Naive thymus-derived CD4-positive, alpha-beta T cell (primary cell): ENCODE measurements at regions of chr12 and their contacts with region 1.

Region 1: GRCh38 chr12:48454667-48455066 is 17.7 kb upstream of the ANP32D start:
- DNase-seq: peak in 7 of 9 donors; percentile 13 to 57 (median 32)
- ATAC-seq: peak; percentile 73
- H3K4me3 ChIP-seq: no peak overlapping the region
- H3K4me3 Mint-ChIP-seq: no peak overlapping the region
- H3K27ac ChIP-seq: no peak overlapping the region
- H3K27ac Mint-ChIP-seq: no peak overlapping the region
- H3K4me1 ChIP-seq: no peaks in the 10 kb centered on the region
- H3K4me1 Mint-ChIP-seq: no peaks in the 10 kb centered on the region
- H3K27me3 ChIP-seq: no peaks in the 10 kb centered on the region
- H3K27me3 Mint-ChIP-seq: peaks cover 0 to 18% (median 8%) of the 10 kb centered on the region in 5 donors

Region 2: GRCh38 chr12:48183091-48183875 is 271.4 kb before region 1 on chr12 and contains the start of gene CCDC184:
- CTCF ChIA-PET with region 1: interaction called, 3 read pairs
- POLR2A ChIA-PET with region 1: no interaction called
- intact Hi-C with region 1: loop called in 1 of 2 experiments (anchors 1 kb)
- DNase-seq: peak; percentile 58 to 85 (median 83)
- ATAC-seq: peak; percentile 84
- H3K4me3 ChIP-seq: peak within 1 kb of the TSS; percentile 80
- H3K4me3 Mint-ChIP-seq: peak within 1 kb of the TSS; percentile 91 to 98 (median 96)
- H3K27ac ChIP-seq: peak within 1 kb of the TSS; percentile 59
- H3K27ac Mint-ChIP-seq: peak within 1 kb of the TSS; percentile 60 to 95 (median 86)
- H3K4me1 ChIP-seq: peaks cover 6 to 11% of the 10 kb centered on the region in 2 donors
- H3K4me1 Mint-ChIP-seq: peaks cover 5 to 28% (median 8%) of the 10 kb centered on the region in 7 donors
- H3K27me3 ChIP-seq: peaks cover 0 to 4% of the 10 kb centered on the region in 2 donors
- H3K27me3 Mint-ChIP-seq: peaks cover 21 to 81% (median 38%) of the 10 kb centered on the region in 5 donors
- total RNA-seq, gene CCDC184: 0.22 to 3.8 (median 1.8) TPM in 4 of 5 experiments, not detected in the other

Region 3: GRCh38 chr12:48189331-48190125 is 265.1 kb before region 1 on chr12:
- CTCF ChIA-PET with region 1: interaction called, 3 read pairs
- POLR2A ChIA-PET with region 1: no interaction called
- intact Hi-C with region 1: loop called in 1 of 2 experiments (anchors 1 kb)
- DNase-seq: peak; percentile 29 to 72 (median 62)
- ATAC-seq: peak; percentile 91
- H3K4me3 ChIP-seq: no peak overlapping the region
- H3K4me3 Mint-ChIP-seq: no peak overlapping the region
- H3K27ac ChIP-seq: no peak overlapping the region
- H3K27ac Mint-ChIP-seq: no peak overlapping the region
- H3K4me1 ChIP-seq: peaks cover 0 to under 1% of the 10 kb centered on the region in 2 donors
- H3K4me1 Mint-ChIP-seq: peaks cover 0 to 12% (median 0%) of the 10 kb centered on the region in 7 donors
- H3K27me3 ChIP-seq: no peaks in the 10 kb centered on the region
- H3K27me3 Mint-ChIP-seq: peaks cover 16 to 76% (median 22%) of the 10 kb centered on the region in 5 donors

Region 4: GRCh38 chr12:48247181-48247966 is 207.3 kb before region 1 on chr12:
- CTCF ChIA-PET with region 1: no interaction called
- POLR2A ChIA-PET with region 1: no interaction called
- intact Hi-C with region 1: loop called in 1 of 2 experiments (anchors 1 kb)
- DNase-seq: no peak
- ATAC-seq: no peak
- H3K4me3 ChIP-seq: no peak overlapping the region
- H3K4me3 Mint-ChIP-seq: no peak overlapping the region
- H3K27ac ChIP-seq: no peak overlapping the region
- H3K27ac Mint-ChIP-seq: no peak overlapping the region
- H3K4me1 ChIP-seq: no peaks in the 10 kb centered on the region
- H3K4me1 Mint-ChIP-seq: no peaks in the 10 kb centered on the region
- H3K27me3 ChIP-seq: peaks cover 0 to 4% of the 10 kb centered on the region in 2 donors
- H3K27me3 Mint-ChIP-seq: peaks cover 0 to 33% (median 25%) of the 10 kb centered on the region in 5 donors

Region 5: DNA sequence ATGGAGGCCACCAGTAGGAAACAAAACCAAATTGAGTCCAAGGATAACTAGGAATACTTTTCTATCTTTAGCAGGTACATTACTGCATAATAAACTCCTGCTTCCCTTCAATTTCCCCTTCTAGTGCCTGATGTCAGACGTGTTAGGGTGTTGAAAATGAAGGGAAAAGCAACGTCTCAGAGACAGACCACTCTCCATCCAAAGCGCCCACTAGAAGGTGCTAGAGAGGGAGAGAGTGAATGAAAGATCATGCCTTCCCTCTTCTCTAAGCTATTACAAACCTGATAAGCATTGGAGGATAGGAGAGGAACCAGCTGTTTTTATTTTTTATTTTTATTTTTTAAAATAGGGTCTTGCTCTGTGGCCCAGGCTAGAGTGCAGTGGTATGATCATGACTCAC is 168.0 kb before region 1 on chr12:
- CTCF ChIA-PET with region 1: no interaction called
- POLR2A ChIA-PET with region 1: interaction called, 3 read pairs
- intact Hi-C with region 1: loop called in 1 of 2 experiments (anchors 1 kb)
- DNase-seq: no peak
- ATAC-seq: peak; percentile 26
- H3K4me3 ChIP-seq: no peak overlapping the region
- H3K4me3 Mint-ChIP-seq: peak overlapping the region in 6 of 10 donors; percentile 8 to 74 (median 57)
- H3K27ac ChIP-seq: no peak overlapping the region
- H3K27ac Mint-ChIP-seq: peak overlapping the region; percentile 71 to 95 (median 88)
- H3K4me1 ChIP-seq: peaks cover 12 to 14% of the 10 kb centered on the region in 2 donors
- H3K4me1 Mint-ChIP-seq: peaks cover 10 to 23% (median 19%) of the 10 kb centered on the region in 7 donors
- H3K27me3 ChIP-seq: no peaks in the 10 kb centered on the region
- H3K27me3 Mint-ChIP-seq: peaks cover 0 to 12% (median 0%) of the 10 kb centered on the region in 5 donors

Region 6: GRCh38 chr12:48712209-48712608 is 257.5 kb after region 1 on chr12:
- CTCF ChIA-PET with region 1: no interaction called
- POLR2A ChIA-PET with region 1: no interaction called
- intact Hi-C with region 1: no loop called
- DNase-seq: no peak
- ATAC-seq: no peak
- H3K4me3 ChIP-seq: no peak overlapping the region
- H3K4me3 Mint-ChIP-seq: no peak overlapping the region
- H3K27ac ChIP-seq: no peak overlapping the region
- H3K27ac Mint-ChIP-seq: peak overlapping the region in 1 of 9 donors; percentile 48
- H3K4me1 ChIP-seq: peaks cover 20 to 24% of the 10 kb centered on the region in 2 donors
- H3K4me1 Mint-ChIP-seq: peaks cover 32 to 83% (median 61%) of the 10 kb centered on the region in 7 donors
- H3K27me3 ChIP-seq: no peaks in the 10 kb centered on the region
- H3K27me3 Mint-ChIP-seq: peaks cover 0 to 4% (median 0%) of the 10 kb centered on the region in 5 donors